Activated CD4-positive, alpha-beta T cell treated with anti-CD3 and anti-CD28 coated beads for 36 hours (primary cell): ENCODE measurements at regions of chr1 and their contacts with region 1.

Region 1: DNA sequence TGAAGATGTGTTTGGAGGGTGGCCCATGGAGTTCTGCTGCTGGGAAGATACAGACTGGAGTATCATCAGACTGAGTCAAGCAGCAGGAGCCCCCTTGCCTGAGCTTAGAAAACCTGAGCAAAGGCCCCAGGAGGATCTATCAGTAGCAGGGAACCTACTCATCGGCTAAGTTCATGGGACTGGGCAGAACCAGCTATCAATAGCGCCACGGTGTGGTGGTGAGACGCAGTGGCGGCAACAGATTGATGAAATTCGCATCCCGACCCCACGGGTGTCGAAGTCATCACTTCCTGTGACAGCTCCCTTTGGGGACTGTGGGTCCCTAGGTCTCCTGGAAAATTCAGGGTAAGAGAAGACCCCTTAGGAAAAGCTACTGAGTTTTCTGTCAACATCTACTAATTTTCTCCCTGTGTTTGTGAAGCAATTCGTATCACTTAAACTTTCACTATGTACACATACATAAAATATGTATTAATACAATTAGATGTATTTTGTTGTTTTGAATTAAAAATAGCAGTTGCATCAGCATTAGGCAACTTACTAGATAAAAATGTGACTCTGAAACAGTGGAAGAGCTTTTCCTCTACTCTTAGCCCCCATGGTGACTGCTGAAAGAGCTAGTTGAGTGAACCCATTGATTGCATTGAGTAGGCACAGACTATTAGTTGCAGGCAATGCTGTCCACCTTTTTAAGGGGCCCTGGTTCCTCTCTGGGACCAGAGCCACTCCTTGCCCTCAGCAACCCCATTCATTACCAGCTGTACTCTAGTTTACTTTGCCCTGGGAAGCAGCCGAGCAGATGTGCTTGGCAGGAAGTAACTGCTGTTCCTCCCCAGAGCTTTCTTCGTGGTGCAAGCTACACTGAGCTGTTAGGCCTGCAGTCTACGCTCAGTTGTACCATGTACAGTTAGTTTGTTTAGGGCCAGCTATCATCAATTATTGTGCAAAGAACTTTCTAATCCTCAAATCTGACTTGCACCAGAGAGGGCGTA is 7.3 kb upstream of the CACNA1S start:
- DNase-seq: peak; percentile 82
- ATAC-seq: peak; percentile 66
- H3K4me3 Mint-ChIP-seq: no peak overlapping the region
- H3K27ac Mint-ChIP-seq: no peak overlapping the region
- H3K4me1 Mint-ChIP-seq: peaks cover 4% of the 10 kb centered on the region
- H3K27me3 Mint-ChIP-seq: no peaks in the 10 kb centered on the region

Region 2: DNA sequence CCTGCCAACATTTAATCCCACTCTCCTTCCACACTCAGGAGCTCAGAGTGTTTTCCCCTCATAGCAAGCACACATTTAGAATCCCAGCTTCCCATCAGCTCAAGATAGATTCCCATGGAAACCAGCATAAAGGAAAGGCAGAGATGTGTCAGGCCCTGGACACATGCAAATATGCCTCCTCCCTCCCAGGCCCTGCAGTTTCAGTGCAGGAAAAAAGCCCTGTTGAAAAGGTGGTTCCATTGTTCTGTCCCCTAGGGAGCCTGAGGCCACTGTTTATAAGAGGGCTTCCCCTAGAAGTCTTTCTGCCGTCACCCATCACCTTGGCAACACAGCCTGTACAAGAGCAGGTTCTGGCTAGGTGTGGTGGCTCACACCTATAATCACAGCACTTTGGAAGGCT is 10.9 kb before region 1 on chr1:
- CTCF ChIA-PET with region 1: interaction called, 13 read pairs
- POLR2A ChIA-PET with region 1: no interaction called
- intact Hi-C with region 1: no loop called
- DNase-seq: no peak
- ATAC-seq: no peak
- H3K4me3 Mint-ChIP-seq: no peak overlapping the region
- H3K27ac Mint-ChIP-seq: no peak overlapping the region
- H3K4me1 Mint-ChIP-seq: no peaks in the 10 kb centered on the region
- H3K27me3 Mint-ChIP-seq: no peaks in the 10 kb centered on the region